Posterior vena cava (tissue), 2 donors: ENCODE measurements at regions of chr10 and their contacts with region 1.

Region 1: GRCh38 chr10:75235375-75236177 is at the start of gene COMTD1:
- DNase-seq: peak; percentile 98
- total RNA-seq, gene COMTD1: 10.0 to 18.1 TPM

Region 2: DNA sequence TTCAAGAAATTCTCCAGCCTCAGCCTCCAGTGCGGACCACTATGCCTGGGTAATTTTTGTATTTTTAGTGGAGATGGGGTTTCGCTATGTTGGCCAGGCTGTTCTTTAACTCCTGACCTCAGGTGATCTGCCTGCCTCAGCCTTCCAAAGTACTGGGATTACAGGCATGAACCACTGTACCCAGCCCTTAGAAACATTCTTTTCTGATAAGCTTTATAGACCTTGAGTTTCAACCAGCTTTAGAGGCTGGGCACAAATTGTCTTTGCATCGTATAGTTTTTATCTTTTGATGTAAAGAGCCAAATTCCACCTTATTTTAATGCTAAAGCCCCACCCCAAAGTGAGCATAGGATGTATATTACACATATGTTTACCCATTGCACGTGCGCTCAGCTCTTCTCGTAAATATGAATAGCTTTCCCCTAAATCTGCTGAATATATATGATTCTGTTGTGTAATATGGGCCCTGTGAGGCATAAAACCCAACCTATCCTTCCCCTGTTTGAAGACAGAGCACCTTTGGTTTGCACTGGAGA is 959.8 kb before region 1 on chr10:
- intact Hi-C with region 1: loop called in 1 of 2 experiments (anchors 1 kb)
- DNase-seq: no peak

Region 3: GRCh38 chr10:75111367-75111906 is 124.1 kb before region 1 on chr10 and contains the start of gene SAMD8:
- intact Hi-C with region 1: loop called in 1 of 2 experiments (anchors 5 kb)
- DNase-seq: peak; percentile 99
- total RNA-seq, gene SAMD8: 26.6 to 29.6 TPM

Region 4: DNA sequence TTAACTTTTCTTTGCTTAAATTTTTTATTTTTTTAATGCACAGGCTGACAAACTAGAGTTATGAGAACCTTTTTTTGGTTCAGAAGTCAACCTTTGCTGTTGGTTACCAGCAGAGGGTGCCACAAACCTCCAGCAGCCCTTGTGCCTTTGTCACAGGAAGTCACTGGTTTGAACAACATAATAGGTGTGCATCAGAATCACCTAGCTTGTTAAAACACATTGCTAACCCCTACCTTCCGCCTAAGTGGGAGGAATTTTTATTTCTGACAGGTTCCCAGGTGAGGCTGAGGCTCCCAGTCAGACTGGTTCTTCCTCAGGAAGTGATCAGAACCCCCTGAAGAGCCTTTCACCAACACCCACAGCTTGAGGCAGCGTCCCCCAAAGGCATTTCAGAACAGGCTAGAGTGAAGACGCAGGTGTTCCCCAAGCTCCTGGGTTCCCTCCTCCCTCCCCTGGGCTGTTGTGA is 47.6 kb before region 1 on chr10:
- intact Hi-C with region 1: loop called (anchors 2 to 5 kb)
- DNase-seq: no peak

Region 5: GRCh38 chr10:75272896-75273295 is 37.3 kb after region 1 on chr10:
- intact Hi-C with region 1: loop called in 1 of 2 experiments (anchors 1 kb)
- DNase-seq: no peak